ENCODE measurements at regions of chr14 and their contacts with region 1.

Region 1: GRCh38 chr14:20855652-20856291 is 35.4 kb upstream of the RNASE3 start:
- DNase-seq: peak; percentile 82
- H3K4me3 ChIP-seq: no peak overlapping the region
- H3K27ac ChIP-seq: no peak overlapping the region
- H3K4me1 ChIP-seq: no peaks in the 10 kb centered on the region
- H3K27me3 ChIP-seq: peaks cover 14 to 20% of the 10 kb centered on the region in 2 experiments
- CTCF ChIP-seq: peak; percentile 64 to 72
- POLR2A ChIP-seq: no peak

Region 2: DNA sequence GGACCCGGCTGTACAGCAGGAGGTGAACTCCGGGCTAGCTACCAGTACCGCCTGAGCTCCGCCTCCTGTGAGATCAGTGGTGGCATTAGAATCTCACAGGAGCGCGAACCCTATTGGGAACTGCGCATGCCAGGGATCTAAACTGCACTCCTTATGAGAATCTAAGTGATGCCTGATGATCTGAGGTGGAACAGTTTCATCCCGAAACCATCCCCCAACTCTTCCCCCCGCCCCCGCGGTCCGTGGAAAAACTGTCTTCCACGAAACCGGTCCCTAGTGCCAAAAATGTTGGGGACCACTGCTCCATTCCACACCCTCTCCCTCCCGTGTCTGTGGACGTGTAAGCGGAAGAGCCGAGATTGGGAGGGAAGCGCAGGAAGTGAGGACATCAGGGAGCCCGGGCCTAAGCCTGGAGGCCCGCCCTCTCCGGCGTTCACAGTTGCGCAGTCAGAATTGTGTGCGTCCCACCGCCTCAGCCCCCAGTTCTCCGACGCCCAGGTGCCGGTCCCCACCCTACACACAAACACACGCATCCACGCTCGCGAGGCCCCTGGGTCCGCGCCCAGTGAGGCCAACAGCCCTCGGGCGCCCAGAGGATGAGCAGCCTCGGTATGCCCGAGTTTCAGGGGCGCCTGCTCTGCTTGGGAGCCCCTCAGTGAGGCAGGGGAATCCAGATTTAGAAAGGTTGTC is 173.2 kb before region 1 on chr14:
- CTCF ChIA-PET with region 1: interaction called, 18 read pairs
- POLR2A ChIA-PET with region 1: no interaction called
- dilution Hi-C with region 1: no loop called
- intact Hi-C with region 1: no loop called
- DNase-seq: peak; percentile 95
- H3K4me3 ChIP-seq: peak overlapping the region; percentile 40 to 84 (median 80)
- H3K27ac ChIP-seq: peak overlapping the region; percentile 97
- H3K4me1 ChIP-seq: peaks cover 27% of the 10 kb centered on the region
- H3K27me3 ChIP-seq: no peaks in the 10 kb centered on the region
- CTCF ChIP-seq: no peak
- POLR2A ChIP-seq: peak; percentile 89

Region 3: GRCh38 chr14:20707622-20708021 is 148.2 kb before region 1 on chr14:
- CTCF ChIA-PET with region 1: interaction called, 11 read pairs
- POLR2A ChIA-PET with region 1: no interaction called
- dilution Hi-C with region 1: no loop called
- intact Hi-C with region 1: no loop called
- DNase-seq: peak; percentile 57
- H3K4me3 ChIP-seq: peak overlapping the region in 1 of 3 experiments; percentile 31
- H3K27ac ChIP-seq: peak overlapping the region; percentile 82
- H3K4me1 ChIP-seq: peaks cover 14% of the 10 kb centered on the region
- H3K27me3 ChIP-seq: no peaks in the 10 kb centered on the region
- CTCF ChIP-seq: no peak
- POLR2A ChIP-seq: no peak

Region 4: GRCh38 chr14:20782280-20782890 is 73.4 kb before region 1 on chr14:
- CTCF ChIA-PET with region 1: interaction called, 13 read pairs
- POLR2A ChIA-PET with region 1: no interaction called
- dilution Hi-C with region 1: no loop called
- intact Hi-C with region 1: no loop called
- DNase-seq: peak; percentile 56
- H3K4me3 ChIP-seq: peak overlapping the region in 1 of 3 experiments; percentile 35
- H3K27ac ChIP-seq: no peak overlapping the region
- H3K4me1 ChIP-seq: peaks cover 20% of the 10 kb centered on the region
- H3K27me3 ChIP-seq: peaks cover 2 to 9% of the 10 kb centered on the region in 2 experiments
- CTCF ChIP-seq: no peak
- POLR2A ChIP-seq: no peak

Region 5: GRCh38 chr14:20873370-20874177 is 17.8 kb after region 1 on chr14:
- CTCF ChIA-PET with region 1: interaction called, 180 read pairs
- POLR2A ChIA-PET with region 1: no interaction called
- dilution Hi-C with region 1: no loop called
- intact Hi-C with region 1: loop called (anchors 1 kb)
- DNase-seq: peak; percentile 73
- H3K4me3 ChIP-seq: peak overlapping the region in 1 of 3 experiments; percentile 15
- H3K27ac ChIP-seq: no peak overlapping the region
- H3K4me1 ChIP-seq: peaks cover 7% of the 10 kb centered on the region
- H3K27me3 ChIP-seq: peaks cover 5 to 8% of the 10 kb centered on the region in 2 experiments
- CTCF ChIP-seq: peak; percentile 87 to 95
- POLR2A ChIP-seq: no peak

Region 6: GRCh38 chr14:20904393-20905029 is 48.7 kb after region 1 on chr14:
- CTCF ChIA-PET with region 1: no interaction called
- POLR2A ChIA-PET with region 1: no interaction called
- dilution Hi-C with region 1: no loop called
- intact Hi-C with region 1: no loop called
- DNase-seq: no peak
- H3K4me3 ChIP-seq: no peak overlapping the region
- H3K27ac ChIP-seq: no peak overlapping the region
- H3K4me1 ChIP-seq: no peaks in the 10 kb centered on the region
- H3K27me3 ChIP-seq: no peaks in the 10 kb centered on the region
- CTCF ChIP-seq: no peak
- POLR2A ChIP-seq: no peak

Region 7: DNA sequence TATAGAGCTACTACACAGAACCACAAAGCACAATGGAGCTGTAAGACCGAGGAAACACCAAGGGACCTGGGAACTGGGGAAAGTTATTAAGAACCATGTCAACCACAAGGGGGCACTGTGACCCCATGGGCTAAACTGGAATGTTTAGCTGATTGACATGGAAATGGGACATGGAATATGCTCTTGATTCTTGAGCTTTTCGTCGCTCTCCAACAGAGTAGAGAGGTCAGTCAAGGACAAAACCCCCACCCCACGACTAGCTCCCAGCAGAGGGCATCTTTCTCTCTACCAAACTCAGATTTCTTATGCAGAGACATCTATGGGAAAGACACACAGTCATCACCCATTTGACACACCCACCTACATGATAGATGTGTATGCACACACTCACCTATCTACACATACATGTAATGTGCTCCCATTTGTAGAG is 159.0 kb after region 1 on chr14:
- CTCF ChIA-PET with region 1: interaction called, 14 read pairs
- POLR2A ChIA-PET with region 1: no interaction called
- dilution Hi-C with region 1: no loop called
- intact Hi-C with region 1: no loop called
- DNase-seq: peak; percentile 83
- H3K4me3 ChIP-seq: no peak overlapping the region
- H3K27ac ChIP-seq: no peak overlapping the region
- H3K4me1 ChIP-seq: no peaks in the 10 kb centered on the region
- H3K27me3 ChIP-seq: peaks cover 19 to 23% of the 10 kb centered on the region in 2 experiments
- CTCF ChIP-seq: peak; percentile 77 to 78
- POLR2A ChIP-seq: no peak